H1 (cell line): ENCODE measurements at regions of chr1 and their contacts with region 1.

Region 1: GRCh38 chr1:67149179-67149770 is 14.5 kb upstream of the C1orf141 start:
- DNase-seq: peak; percentile 34 to 60
- H3K4me3 ChIP-seq: no peak overlapping the region
- H3K27ac ChIP-seq: no peak overlapping the region
- H3K4me1 ChIP-seq: 0 out of 7 replicates have a peak, but pooled peaks cover 0 to 4% (median 0%) of the 10 kb centered on the region in 4 experiments
- H3K27me3 ChIP-seq: no peaks in the 10 kb centered on the region
- CTCF ChIP-seq: peak; percentile 58 to 99 (median 78)
- EP300 ChIP-seq: no peak; a peak in 1 of 3 replicates
- POLR2A ChIP-seq: no peak
- RAD21 ChIP-seq: peak; percentile 92 to 96

Region 2: GRCh38 chr1:66984491-66984890 is 164.8 kb before region 1 on chr1:
- CTCF ChIA-PET with region 1: interaction called, 14 read pairs
- POLR2A ChIA-PET with region 1: no interaction called
- DNase-seq: no peak
- H3K4me3 ChIP-seq: no peak overlapping the region
- H3K27ac ChIP-seq: no peak overlapping the region
- H3K4me1 ChIP-seq: no peaks in the 10 kb centered on the region
- H3K27me3 ChIP-seq: no peaks in the 10 kb centered on the region
- CTCF ChIP-seq: no peak
- EP300 ChIP-seq: no peak
- POLR2A ChIP-seq: no peak
- RAD21 ChIP-seq: no peak

Region 3: GRCh38 chr1:67005068-67005467 is 144.2 kb before region 1 on chr1:
- CTCF ChIA-PET with region 1: interaction called, 27 read pairs
- POLR2A ChIA-PET with region 1: no interaction called
- DNase-seq: no peak
- H3K4me3 ChIP-seq: no peak overlapping the region
- H3K27ac ChIP-seq: no peak overlapping the region
- H3K4me1 ChIP-seq: no peaks in the 10 kb centered on the region
- H3K27me3 ChIP-seq: no peaks in the 10 kb centered on the region
- CTCF ChIP-seq: no peak
- EP300 ChIP-seq: no peak
- POLR2A ChIP-seq: no peak
- RAD21 ChIP-seq: no peak

Region 4: DNA sequence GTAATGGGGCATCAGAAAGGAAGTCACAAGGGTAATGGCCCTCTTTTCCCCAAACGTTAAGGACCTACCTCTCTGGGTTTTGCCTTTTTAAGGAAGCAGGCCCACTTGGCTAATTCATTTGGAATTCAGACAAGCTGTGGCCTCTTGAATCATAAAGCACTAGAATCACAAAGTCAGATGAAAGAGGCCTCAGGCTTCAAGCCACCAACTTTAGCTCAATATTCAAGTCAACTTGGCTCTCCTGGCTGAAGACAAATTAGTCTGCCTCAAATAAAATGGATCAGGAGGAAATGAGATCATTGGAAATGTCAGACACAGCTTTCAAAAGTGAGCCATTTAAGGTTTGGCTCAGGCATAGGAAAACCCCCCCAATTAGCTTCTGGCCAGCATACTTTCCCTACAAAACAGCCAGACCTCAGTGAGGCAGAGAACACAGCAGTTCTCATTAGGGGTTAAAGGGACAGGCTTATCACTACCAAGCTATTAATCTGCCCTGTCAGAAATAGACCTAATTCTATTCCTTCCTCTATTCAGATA is 129.6 kb before region 1 on chr1:
- CTCF ChIA-PET with region 1: interaction called, 27 read pairs
- POLR2A ChIA-PET with region 1: no interaction called
- DNase-seq: no peak
- H3K4me3 ChIP-seq: no peak overlapping the region
- H3K27ac ChIP-seq: no peak overlapping the region
- H3K4me1 ChIP-seq: peaks cover 0 to 12% (median 9%) of the 10 kb centered on the region in 4 experiments; a peak in 4 of 7 replicates
- H3K27me3 ChIP-seq: 0 out of 7 replicates have a peak, but pooled peaks cover 0 to 2% (median 0%) of the 10 kb centered on the region in 4 experiments
- CTCF ChIP-seq: no peak
- EP300 ChIP-seq: no peak
- POLR2A ChIP-seq: no peak
- RAD21 ChIP-seq: no peak

Region 5: GRCh38 chr1:67126111-67126746 is 23.0 kb before region 1 on chr1:
- CTCF ChIA-PET with region 1: interaction called, 34 read pairs
- POLR2A ChIA-PET with region 1: no interaction called
- DNase-seq: no peak
- H3K4me3 ChIP-seq: no peak overlapping the region
- H3K27ac ChIP-seq: no peak overlapping the region
- H3K4me1 ChIP-seq: no peaks in the 10 kb centered on the region
- H3K27me3 ChIP-seq: no peaks in the 10 kb centered on the region
- CTCF ChIP-seq: peak in 1 of 3 experiments; percentile 1; a peak in 1 of 4 replicates
- EP300 ChIP-seq: no peak
- POLR2A ChIP-seq: no peak
- RAD21 ChIP-seq: peak; percentile 9 to 18; a peak in 1 of 4 replicates

Region 6: DNA sequence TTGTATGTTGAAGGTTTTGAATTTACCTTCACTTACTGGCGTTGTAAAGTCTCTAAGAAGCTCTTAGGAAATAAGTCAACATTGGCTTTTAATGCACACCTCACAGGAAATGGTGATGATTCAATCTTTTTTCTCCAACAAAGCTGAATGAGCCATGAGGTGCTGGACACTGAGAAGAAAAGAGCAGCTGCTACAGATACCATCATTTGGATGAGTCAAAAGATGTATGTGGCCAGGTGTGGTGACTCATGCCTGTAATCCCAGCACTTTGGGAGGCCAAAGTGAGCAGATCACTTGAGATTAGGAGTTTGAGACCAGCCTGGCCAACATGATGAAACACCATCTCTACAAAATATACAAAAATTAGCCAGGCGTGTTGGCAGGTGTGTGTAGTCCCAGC is 13.7 kb after region 1 on chr1:
- CTCF ChIA-PET with region 1: interaction called, 14 read pairs
- POLR2A ChIA-PET with region 1: no interaction called
- DNase-seq: no peak
- H3K4me3 ChIP-seq: no peak overlapping the region
- H3K27ac ChIP-seq: no peak overlapping the region
- H3K4me1 ChIP-seq: no peaks in the 10 kb centered on the region
- H3K27me3 ChIP-seq: no peaks in the 10 kb centered on the region
- CTCF ChIP-seq: no peak
- EP300 ChIP-seq: no peak
- POLR2A ChIP-seq: no peak
- RAD21 ChIP-seq: no peak

Region 7: DNA sequence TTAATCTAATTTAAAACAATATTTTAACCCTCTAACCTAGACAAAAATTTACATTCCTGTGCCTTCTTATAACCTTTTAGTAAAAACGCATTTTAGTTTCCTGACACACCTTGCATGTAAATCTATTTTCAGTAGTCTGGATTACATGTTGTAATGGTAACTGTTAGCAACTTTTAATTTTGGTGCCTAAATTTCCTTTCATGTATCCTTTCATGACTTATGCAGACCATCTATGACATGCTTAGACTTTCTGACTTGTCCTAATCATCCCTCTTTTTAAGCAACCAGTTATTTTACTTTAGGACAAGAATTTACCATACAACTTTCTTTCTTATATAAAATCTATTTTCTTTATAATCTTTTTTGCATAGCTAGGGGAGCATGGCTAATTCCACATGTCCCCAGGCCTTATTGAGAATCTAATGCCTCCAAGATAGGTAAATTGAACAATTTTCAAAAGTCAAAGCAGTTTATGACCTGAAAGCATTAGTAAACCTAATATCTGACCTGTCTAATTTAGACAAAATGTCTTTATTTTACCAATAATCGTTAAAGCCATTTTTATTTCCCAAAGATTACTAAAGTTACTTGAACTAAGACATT is 100.9 kb after region 1 on chr1:
- CTCF ChIA-PET with region 1: no interaction called
- POLR2A ChIA-PET with region 1: no interaction called
- DNase-seq: no peak
- H3K4me3 ChIP-seq: peak overlapping the region in 1 of 4 experiments; percentile 3; a peak in 1 of 8 replicates
- H3K27ac ChIP-seq: no peak overlapping the region
- H3K4me1 ChIP-seq: no peaks in the 10 kb centered on the region
- H3K27me3 ChIP-seq: no peaks in the 10 kb centered on the region
- CTCF ChIP-seq: no peak
- EP300 ChIP-seq: no peak
- POLR2A ChIP-seq: no peak
- RAD21 ChIP-seq: no peak